ENCODE measurements at regions of chr17 and their contacts with region 1.

Region 1: DNA sequence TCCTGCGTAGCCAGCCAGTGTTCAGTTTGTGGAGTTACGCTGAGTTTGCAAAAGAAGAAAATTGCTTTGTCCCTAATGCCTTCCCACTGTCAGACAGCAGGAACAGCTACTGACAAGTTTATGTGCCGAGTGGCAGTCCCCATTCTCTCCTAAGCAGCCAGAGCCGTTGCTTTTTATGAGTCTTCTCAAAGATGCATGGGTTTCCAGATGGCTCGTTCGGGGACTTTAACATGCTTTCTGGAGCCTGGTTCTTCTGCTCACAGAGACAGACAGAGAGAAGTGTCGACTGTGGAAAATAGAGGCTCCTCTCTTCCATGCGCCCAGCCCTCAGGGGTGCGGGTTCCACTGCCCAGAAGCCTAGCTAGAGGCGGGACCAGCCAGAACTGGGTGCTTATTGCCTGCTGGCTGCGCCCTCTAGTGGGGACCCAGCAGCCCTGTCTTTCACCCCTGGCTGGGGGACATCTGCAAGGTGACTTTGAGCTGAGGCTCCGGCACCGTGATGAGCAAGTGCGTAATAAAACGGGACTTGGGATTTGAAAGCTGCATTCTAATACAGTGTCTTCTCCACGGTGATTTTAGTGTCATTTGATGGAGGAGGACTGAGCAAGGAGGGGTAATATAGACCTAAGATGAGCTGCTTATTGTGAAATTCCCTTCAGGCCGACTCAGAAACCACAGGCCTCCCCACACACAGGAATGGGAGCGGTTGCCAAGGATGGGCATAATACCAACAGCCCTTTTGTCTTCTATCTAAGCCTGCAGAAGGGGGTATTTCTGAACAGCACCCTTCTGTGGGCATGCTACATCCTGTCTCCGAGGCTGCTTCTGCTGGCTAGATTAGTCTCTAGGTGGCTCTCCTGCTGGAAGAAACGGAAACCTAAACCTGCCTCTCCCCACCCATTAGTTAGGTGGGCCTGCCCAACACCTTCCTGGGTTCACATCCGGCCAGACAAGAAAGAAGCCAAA is 73.1 kb downstream of the CCDC182 start:
- DNase-seq: peak; percentile 81 to 88
- H3K4me3 ChIP-seq: no peak overlapping the region
- H3K27ac ChIP-seq: no peak overlapping the region
- H3K4me1 ChIP-seq: no peaks in the 10 kb centered on the region; a peak in 1 of 7 replicates
- H3K27me3 ChIP-seq: no peaks in the 10 kb centered on the region
- CTCF ChIP-seq: peak; percentile 97 to 99 (median 98)
- EP300 ChIP-seq: no peak
- POLR2A ChIP-seq: no peak
- RAD21 ChIP-seq: peak; percentile 93 to 97

Region 2: DNA sequence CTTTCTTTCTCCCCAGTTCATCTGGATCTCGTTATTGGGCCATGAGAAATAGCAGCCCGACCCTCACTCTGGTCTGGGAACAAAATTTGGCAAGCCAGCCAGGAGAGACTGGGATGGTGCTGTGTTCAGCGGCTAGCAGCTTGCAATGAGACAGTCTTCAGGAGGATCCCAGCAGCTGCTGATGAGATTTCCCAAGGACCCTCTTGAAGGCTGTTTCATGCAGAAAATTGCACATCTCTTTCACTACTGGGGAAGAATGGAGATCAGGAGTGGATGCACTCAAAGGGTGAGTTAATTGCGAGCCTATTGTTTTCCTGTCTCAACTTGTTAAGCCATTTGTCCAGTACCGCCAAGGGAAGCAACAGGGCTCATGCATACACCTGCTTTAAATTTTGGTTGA is 705.6 kb before region 1 on chr17:
- CTCF ChIA-PET with region 1: no interaction called
- POLR2A ChIA-PET with region 1: no interaction called
- DNase-seq: no peak
- H3K4me3 ChIP-seq: no peak overlapping the region
- H3K27ac ChIP-seq: no peak overlapping the region
- H3K4me1 ChIP-seq: no peaks in the 10 kb centered on the region
- H3K27me3 ChIP-seq: no peaks in the 10 kb centered on the region
- CTCF ChIP-seq: no peak
- EP300 ChIP-seq: no peak
- POLR2A ChIP-seq: no peak
- RAD21 ChIP-seq: no peak

Region 3: DNA sequence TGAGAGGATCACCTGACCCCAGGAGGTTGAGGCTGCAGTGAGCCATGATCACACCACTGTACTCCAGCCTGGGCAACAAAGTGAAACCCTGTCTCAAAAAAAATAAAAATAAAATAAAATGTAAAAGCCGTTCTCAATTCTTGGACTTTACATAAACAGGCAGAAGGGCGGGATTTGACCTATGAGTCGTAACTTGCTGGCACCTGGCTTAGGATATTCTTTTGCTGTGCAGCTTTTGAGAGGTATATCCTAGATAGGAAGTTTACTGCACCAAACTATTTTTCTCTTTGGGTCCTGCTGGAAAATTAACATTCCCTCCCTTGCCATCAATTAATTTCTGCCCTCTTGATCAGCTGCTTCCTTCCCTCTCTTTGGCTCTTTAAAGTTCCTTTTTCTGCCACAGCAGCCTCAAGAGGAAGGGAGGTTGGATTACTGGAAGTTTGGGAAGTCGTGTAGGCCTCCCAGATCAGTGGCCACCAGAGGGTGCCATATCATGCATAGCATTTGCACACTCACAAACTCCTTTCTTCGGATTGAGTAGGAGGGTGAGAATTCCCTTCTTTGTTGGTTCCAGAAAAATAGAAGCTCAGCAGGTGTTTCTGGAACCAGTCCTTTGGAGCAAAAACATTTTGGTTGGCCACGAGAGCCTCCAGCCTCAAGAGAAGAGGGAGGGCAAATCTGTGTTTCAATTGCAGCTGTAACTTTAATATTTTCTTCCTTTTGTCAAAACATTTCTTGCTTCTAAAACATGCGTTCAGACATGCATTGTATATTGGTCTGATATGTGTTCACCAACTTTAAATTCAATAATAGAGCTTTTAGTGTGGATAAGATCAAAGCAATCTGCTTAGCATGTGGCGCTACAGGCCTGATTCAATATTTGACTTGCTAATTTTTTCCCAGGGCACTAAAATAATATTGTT is 74.2 kb before region 1 on chr17:
- CTCF ChIA-PET with region 1: interaction called, 100 read pairs
- POLR2A ChIA-PET with region 1: interaction called, 3 read pairs
- DNase-seq: peak; percentile 49 to 79
- H3K4me3 ChIP-seq: no peak overlapping the region
- H3K27ac ChIP-seq: no peak overlapping the region
- H3K4me1 ChIP-seq: peaks cover 0 to 3% (median 1%) of the 10 kb centered on the region in 4 experiments; a peak in 2 of 7 replicates
- H3K27me3 ChIP-seq: no peaks in the 10 kb centered on the region
- CTCF ChIP-seq: peak; percentile 69 to 85 (median 83)
- EP300 ChIP-seq: no peak
- POLR2A ChIP-seq: no peak
- RAD21 ChIP-seq: peak; percentile 82 to 85

Region 4: GRCh38 chr17:57622683-57623433 is 49.1 kb before region 1 on chr17:
- CTCF ChIA-PET with region 1: interaction called, 10 read pairs
- POLR2A ChIA-PET with region 1: no interaction called
- DNase-seq: no peak
- H3K4me3 ChIP-seq: no peak overlapping the region
- H3K27ac ChIP-seq: no peak overlapping the region
- H3K4me1 ChIP-seq: no peaks in the 10 kb centered on the region
- H3K27me3 ChIP-seq: no peaks in the 10 kb centered on the region
- CTCF ChIP-seq: no peak
- EP300 ChIP-seq: no peak
- POLR2A ChIP-seq: no peak
- RAD21 ChIP-seq: no peak

Region 5: DNA sequence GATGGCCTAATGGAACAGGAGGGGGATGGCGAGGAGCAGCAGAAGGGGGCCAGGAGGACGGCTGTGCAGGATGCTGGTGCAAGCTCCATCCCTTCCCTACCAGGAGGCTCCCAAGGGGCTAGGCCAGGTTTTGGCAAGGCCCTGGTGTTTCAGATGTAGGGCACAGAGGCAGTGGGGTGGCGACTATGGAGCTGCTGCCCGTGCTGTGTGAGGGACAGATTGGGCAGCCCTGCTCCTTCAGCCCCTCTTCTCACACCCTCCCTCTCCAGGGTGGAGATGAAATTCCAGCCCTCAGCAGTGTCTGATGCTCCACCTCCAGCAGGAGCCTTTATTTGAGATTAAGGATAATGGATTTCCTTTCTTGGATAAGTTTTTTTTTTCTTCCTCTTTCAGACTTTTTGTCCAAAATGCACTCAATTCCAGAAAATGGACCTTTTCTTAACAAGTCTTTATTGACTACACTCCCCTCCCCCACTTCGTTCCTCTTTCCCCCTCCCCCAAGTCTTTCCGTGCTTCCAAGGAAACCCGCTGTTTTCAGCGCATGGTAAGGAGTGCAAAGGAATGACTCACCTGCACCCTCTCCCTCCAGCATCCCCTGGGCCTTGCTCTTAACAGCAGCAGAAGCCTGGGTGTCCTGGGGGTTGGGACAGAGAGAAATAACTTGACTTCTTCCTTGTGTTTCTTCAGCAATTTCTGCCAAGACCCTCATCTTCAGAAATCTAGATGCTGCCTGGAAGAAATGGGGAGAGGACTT is 22.0 kb before region 1 on chr17:
- CTCF ChIA-PET with region 1: interaction called, 10 read pairs
- POLR2A ChIA-PET with region 1: interaction called, 3 read pairs
- DNase-seq: peak in 1 of 2 experiments; percentile 55
- H3K4me3 ChIP-seq: peak overlapping the region in 2 of 4 experiments; percentile 26 to 41; a peak in 1 of 8 replicates
- H3K27ac ChIP-seq: peak overlapping the region; percentile 17; the same call in 1 of the 2 replicates
- H3K4me1 ChIP-seq: peaks cover 10 to 23% (median 20%) of the 10 kb centered on the region in 4 experiments
- H3K27me3 ChIP-seq: no peaks in the 10 kb centered on the region
- CTCF ChIP-seq: no peak
- EP300 ChIP-seq: 0 out of 3 replicates have a peak, but pooled peaks of 1 of the 2 experiments have one; percentile 40
- POLR2A ChIP-seq: no peak
- RAD21 ChIP-seq: no peak

Region 6: GRCh38 chr17:57697891-57698711 is 26.2 kb after region 1 on chr17:
- CTCF ChIA-PET with region 1: interaction called, 12 read pairs
- POLR2A ChIA-PET with region 1: no interaction called
- DNase-seq: peak in 1 of 2 experiments; percentile 37
- H3K4me3 ChIP-seq: no peak overlapping the region
- H3K27ac ChIP-seq: no peak overlapping the region
- H3K4me1 ChIP-seq: peaks cover 0 to 6% (median 0%) of the 10 kb centered on the region in 4 experiments; a peak in 1 of 7 replicates
- H3K27me3 ChIP-seq: no peaks in the 10 kb centered on the region
- CTCF ChIP-seq: no peak
- EP300 ChIP-seq: no peak
- POLR2A ChIP-seq: no peak
- RAD21 ChIP-seq: no peak

Region 7: DNA sequence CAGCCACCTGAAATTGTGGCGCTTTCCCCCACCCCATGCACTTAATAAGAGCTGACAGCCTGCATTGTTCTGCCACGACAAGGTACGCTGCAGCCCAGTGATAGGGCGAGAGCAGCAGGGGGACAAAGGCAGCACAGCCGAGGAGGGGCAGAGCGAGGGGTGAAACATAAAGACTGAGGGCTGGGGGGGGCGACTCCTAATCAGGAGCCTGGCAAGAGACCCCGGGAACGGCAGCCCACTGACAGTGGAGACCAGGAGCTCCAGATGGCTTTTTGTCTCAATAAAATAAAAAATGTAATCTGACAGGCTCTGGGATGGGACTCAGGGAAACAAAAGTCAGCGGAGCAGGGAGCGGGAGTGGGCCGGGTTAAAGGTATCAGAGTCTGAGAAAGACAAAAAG is 90.5 kb after region 1 on chr17:
- CTCF ChIA-PET with region 1: no interaction called
- POLR2A ChIA-PET with region 1: no interaction called
- DNase-seq: no peak
- H3K4me3 ChIP-seq: peak overlapping the region in 2 of 4 experiments; percentile 10 to 18; a peak in 2 of 8 replicates
- H3K27ac ChIP-seq: no peak overlapping the region
- H3K4me1 ChIP-seq: peaks cover 3 to 12% (median 7%) of the 10 kb centered on the region in 4 experiments
- H3K27me3 ChIP-seq: no peaks in the 10 kb centered on the region
- CTCF ChIP-seq: no peak
- EP300 ChIP-seq: no peak
- POLR2A ChIP-seq: no peak
- RAD21 ChIP-seq: no peak